Activated T-helper 1 cell treated with anti-CD3 and anti-CD28 coated beads, Interleukin-12 subunit alpha, Interleukin-12 subunit beta, Interleukin-2, Interleukin-4 antibody, amounts not matched to agents 30 ng/mL and 10 ng/mL and 1 ng/mL, durations not matched to agents 14 hours and 24 hours and 36 hours (primary cell): ENCODE measurements at regions of chr18 and their contacts with region 1.

Region 1: DNA sequence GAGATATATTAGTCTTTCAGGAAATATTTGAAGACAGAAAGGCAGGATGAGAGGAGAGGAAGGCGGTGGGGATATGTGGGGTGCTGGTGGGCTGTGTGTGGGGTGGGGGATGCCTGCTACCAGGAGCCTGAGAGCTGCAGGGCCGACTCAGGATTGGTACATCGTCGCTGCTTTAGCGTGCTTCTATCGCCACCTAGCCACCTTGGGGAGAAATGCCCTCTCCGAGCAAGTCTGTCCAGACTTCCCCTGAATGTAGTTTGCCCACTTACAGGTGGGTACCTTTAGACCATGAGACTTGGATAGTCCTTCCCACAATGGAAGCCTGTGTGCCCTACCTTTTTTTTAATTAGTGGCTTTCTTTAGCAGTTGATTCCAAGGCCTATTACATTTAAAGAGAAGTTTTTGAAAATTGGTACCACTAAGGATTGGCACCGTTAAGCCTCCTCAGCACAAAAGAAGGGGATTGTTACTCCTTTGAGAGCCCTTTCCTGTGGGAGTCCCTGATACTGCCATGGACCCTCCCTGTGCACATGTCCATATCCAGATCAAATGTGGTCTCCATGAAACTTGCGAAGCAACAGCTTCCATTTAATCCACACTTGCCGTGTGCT is 114.1 kb upstream of the NDUFV2 start:
- DNase-seq: peak; percentile 10
- H3K4me3 Mint-ChIP-seq: no peak overlapping the region
- H3K27ac Mint-ChIP-seq: no peak overlapping the region
- H3K4me1 Mint-ChIP-seq: no peaks in the 10 kb centered on the region
- H3K27me3 Mint-ChIP-seq: peaks cover 4% of the 10 kb centered on the region

Region 2: DNA sequence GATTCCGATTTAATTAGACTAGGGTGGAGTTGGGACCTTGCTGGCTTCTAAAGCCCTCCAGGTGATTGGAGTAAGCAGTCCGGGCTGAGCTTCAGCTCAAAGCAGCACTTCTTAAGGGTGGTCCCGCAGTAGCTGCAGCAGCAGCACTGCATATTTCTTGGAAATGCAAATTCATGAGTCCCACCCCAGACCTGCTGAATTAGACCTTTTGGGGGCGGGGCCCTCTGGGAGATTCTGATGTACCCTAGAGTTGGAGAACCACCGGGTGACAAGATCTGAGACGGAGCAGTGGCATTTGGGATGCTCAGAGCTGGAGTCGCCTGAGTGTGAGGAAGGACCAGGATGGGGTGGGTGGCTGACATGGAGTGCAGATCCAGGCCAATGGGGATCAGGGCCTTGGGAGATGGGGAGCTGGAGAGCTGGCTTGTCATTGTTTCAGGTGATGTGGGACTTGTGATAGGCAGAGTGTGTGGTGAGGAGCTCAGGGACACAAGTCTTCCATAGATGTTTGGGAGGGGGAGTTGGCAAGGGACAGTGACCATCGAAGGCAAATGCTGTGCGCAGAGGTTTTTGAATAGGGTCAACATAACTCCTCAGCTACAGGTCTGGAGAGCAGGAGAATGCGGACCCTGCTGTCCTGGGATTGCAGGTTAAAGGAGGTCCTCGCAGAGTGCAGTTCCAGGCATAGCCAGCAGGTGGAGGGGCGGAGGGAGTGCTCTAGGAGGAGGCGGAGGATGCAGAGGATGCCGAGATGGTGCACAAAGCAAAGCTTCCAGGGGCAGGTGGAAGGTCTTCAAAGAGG is 510.0 kb before region 1 on chr18:
- intact Hi-C with region 1: loop called (anchors 1 kb)
- DNase-seq: peak; percentile 24
- H3K4me3 Mint-ChIP-seq: no peak overlapping the region
- H3K27ac Mint-ChIP-seq: no peak overlapping the region
- H3K4me1 Mint-ChIP-seq: no peaks in the 10 kb centered on the region
- H3K27me3 Mint-ChIP-seq: peaks cover 4% of the 10 kb centered on the region

Region 3: DNA sequence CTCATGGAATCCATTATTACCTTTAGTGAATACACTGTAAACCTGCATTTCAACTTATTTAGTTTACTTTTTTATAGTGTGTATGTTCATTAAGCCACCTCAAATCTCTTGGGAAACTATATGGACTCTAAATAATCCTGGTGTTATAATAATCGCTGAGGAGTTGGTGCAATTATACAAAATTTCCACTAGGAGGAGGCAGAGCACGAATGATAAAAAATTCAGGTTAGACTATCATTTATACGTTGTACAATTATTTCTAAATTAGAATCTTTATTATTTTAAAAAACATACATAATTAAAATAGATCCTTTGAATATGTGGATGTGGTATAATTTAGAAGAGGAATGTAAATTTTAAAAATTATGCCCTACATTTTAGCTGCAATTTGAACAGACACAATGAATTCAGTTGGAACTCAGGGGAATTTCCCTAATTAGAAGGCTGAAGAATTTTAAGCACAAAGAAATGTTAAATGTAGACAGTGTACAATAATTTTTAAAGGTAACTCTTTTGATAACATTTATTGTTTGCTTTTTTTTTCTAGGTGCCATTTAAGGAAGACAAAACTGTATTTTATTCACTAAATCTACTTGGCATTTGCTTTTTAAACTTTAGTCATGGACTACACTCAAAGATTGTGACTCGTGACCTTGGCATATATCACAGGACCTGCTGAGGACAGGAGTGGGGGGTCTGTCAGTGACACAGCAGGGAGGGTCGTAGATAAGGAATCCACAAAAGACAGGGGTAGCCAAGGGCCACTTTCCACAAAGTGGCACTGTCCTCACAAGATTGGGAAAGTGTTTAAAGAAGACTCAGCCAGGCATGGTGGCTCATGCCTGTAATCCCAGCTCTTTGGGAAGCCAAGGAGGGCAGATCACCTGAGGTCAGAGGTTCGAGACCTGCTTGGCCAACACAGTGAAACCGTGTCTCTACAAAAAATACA is 333.6 kb before region 1 on chr18:
- intact Hi-C with region 1: loop called (anchors 1 kb)
- DNase-seq: no peak
- H3K4me3 Mint-ChIP-seq: no peak overlapping the region
- H3K27ac Mint-ChIP-seq: no peak overlapping the region
- H3K4me1 Mint-ChIP-seq: no peaks in the 10 kb centered on the region
- H3K27me3 Mint-ChIP-seq: peaks cover 22% of the 10 kb centered on the region

Region 4: DNA sequence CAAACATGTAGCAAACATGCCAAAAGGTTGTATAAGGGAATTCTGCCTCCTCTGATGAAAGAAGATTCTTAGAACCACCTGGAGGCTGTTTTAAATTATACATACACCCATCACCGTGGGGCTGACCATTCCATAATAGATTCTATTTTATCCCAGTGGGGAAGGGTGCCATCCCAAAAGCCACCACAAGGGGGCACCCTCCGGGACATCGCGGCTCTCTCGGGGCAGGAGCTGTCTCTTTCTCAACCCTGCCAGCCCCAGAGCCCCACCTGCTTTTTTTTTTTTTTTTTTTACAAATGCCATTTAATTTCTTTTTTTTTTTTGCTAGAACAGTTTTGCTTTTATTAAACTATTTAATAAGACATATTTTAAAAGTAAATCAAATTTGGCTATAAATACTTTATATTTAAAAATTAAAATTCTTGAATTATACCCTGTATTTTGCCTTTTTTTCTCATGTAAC is 291.6 kb before region 1 on chr18:
- intact Hi-C with region 1: loop called (anchors 1 kb)
- DNase-seq: peak; percentile 63
- H3K4me3 Mint-ChIP-seq: no peak overlapping the region
- H3K27ac Mint-ChIP-seq: no peak overlapping the region
- H3K4me1 Mint-ChIP-seq: no peaks in the 10 kb centered on the region
- H3K27me3 Mint-ChIP-seq: peaks cover 25% of the 10 kb centered on the region

Region 5: DNA sequence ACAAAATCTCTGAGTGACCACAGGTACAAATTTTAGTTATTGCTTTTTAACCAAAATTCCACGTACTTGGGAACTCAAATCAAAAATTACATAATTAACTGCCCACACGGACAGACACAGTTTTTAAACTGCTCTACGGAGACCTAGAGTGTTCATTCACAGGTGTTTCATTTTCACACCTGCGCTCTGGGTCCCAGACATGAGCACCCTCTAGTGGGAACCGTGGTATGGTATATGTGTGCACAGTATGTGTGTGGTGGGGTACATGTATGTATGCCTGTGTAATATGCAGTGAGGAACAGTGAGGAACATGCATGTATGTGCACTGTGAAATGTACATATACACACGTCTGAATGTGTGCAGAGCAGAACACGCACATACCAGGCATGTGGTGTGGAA is 561.0 kb after region 1 on chr18:
- intact Hi-C with region 1: no loop called
- DNase-seq: no peak
- H3K4me3 Mint-ChIP-seq: no peak overlapping the region
- H3K27ac Mint-ChIP-seq: no peak overlapping the region
- H3K4me1 Mint-ChIP-seq: no peaks in the 10 kb centered on the region
- H3K27me3 Mint-ChIP-seq: no peaks in the 10 kb centered on the region